ENCODE measurements at regions of chr12 and their contacts with region 1.

Region 1: GRCh38 chr12:15789220-15790171 is at the start of gene EPS8:
- DNase-seq: peak; percentile 93

Region 2: GRCh38 chr12:15700595-15700994 is 88.9 kb before region 1 on chr12:
- CTCF ChIA-PET with region 1: no interaction called
- POLR2A ChIA-PET with region 1: no interaction called
- DNase-seq: no peak

Region 3: GRCh38 chr12:15752785-15753184 is 36.7 kb before region 1 on chr12:
- CTCF ChIA-PET with region 1: no interaction called
- POLR2A ChIA-PET with region 1: no interaction called
- DNase-seq: no peak

Region 4: DNA sequence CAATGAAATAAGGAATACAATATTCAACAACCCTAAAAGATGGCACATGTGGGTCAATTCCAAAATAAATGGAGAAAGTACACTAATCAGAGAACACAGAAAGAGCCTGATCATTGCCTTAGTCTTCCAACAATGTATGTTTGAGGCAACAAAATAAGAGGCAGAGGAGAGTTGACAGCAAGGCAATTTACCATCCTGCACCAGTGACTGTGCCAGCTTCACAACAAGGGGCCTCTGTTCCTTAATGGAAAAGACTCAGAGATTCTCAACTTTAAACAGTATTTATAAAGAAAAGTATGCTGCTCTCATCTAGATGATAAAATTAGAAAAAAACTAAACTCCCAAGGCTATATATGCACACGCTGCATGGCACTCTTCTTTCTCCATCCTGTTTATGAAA is 26.2 kb before region 1 on chr12:
- CTCF ChIA-PET with region 1: no interaction called
- POLR2A ChIA-PET with region 1: no interaction called
- DNase-seq: no peak

Region 5: DNA sequence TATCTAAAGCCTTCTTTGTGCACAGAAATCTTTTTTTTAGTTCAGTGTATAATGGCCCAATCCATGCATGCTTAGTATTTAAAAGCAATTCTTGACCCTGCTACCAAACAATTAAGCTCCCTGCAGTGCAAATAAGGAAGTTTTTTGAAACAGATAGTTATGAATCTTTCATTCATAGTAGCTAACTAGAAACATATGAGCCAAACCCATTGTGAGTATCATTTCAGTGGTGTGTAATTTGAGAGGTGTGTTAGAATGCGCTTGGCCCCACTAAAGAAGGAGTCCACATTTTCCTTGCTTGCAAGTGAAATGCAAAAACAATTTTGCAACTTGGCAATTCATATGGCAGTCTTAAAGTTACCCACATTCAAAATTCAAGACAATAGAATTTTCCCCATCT is 14.7 kb before region 1 on chr12:
- CTCF ChIA-PET with region 1: interaction called, 6 read pairs
- POLR2A ChIA-PET with region 1: interaction called, 12 read pairs
- DNase-seq: no peak

Region 6: DNA sequence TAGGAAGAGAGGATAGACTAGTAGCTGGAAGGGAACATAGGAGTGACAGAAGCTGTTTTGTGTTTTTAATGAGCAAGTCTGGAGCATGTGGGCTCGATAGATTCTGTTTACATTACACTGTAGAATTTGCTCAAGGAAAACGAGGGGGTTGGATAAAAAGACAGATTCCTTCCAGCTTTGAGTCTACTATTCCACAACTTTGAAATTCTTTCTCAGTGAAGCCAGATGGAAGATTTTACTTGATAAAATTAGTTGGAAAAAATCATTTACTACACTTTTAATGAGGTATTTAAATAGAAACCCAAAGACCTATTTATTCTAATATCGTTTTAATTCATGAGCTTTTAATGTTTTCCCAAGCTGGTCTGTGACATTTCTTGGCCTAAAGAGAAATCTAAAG is 19.2 kb after region 1 on chr12:
- CTCF ChIA-PET with region 1: no interaction called
- POLR2A ChIA-PET with region 1: interaction called, 11 read pairs
- DNase-seq: no peak

Measured in HEK293T (cell line).